Sciatic nerve (tissue), 2 donors: ENCODE measurements at regions of chr6 and their contacts with region 1.

Region 1: DNA sequence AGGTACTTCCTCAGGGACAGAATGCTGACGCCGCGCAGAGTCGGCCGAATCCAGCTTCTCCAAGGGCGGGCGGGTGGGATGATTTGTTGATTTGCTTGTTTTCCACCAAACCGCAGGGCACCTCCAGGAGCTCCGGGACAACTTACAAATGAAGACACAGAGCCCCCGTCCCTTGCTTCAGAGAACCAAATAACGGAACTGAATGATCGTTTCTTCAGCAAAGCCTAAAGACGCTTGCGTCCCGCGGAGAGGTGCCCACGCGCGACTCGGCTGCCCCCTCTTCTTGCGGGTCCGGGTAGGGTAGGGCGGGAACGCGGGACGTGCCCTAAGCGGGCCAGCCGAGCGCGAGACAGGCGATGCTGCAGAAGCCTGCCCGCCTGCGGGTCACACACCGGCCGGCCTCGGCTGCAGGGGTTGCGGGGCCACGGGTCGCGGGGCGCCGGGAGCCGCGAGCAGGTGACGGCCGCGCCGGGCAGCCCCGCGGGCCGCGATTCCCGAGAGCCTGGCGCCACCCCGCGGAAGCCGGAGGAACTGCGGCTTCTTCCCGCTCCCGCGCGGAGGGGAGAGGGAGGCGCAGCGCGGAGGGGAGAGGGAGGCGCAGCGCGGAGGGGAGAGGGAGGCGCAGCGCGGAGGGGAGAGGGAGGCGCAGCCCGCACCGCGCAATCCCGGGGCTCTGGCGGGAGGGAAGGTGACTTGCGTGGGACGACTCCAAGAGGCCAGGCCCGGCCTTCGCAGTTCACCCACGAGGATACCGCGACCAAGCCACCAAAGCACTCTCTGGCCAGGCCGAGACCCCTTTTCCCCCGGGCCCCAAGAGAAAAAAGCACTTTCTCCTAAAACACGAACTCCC is 7.7 kb upstream of the FOXF2 start:
- DNase-seq: no peak
- ATAC-seq: peak; percentile 72

Region 2: DNA sequence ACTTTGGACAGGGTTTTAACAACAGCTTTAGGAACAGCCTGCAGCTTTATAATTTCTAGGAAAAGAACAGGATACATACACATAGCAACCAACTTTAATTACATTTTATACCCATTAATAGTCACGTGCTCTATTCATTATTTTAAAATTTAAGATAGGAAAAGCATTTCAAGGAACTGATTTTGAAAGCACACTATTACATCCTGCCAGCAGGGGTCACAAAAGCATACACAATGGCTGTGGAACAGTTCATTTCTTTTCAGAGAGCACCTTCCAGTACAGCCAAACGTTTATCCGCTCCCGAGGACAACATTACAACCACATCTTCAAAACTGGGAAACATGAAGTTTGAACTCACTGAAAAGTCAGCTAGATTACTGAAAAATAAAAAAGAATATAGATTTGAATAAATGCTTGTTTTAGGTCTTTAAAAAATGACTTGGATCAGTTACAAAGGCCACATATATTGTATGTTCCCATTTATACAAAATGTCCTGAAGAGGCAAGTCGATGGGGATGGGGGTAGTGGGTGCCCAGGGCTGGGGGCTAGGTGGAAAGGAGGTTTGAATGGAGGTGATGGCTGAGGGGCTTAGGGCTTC is 584.1 kb before region 1 on chr6:
- intact Hi-C with region 1: loop called (anchors 5 kb)
- DNase-seq: no peak
- ATAC-seq: peak; percentile 72

Region 3: GRCh38 chr6:1170794-1171193 is 210.9 kb before region 1 on chr6:
- intact Hi-C with region 1: no loop called
- DNase-seq: no peak
- ATAC-seq: no peak